Naive thymus-derived CD4-positive, alpha-beta T cell (primary cell): ENCODE measurements at regions of chr2 and their contacts with region 1.

Region 1: DNA sequence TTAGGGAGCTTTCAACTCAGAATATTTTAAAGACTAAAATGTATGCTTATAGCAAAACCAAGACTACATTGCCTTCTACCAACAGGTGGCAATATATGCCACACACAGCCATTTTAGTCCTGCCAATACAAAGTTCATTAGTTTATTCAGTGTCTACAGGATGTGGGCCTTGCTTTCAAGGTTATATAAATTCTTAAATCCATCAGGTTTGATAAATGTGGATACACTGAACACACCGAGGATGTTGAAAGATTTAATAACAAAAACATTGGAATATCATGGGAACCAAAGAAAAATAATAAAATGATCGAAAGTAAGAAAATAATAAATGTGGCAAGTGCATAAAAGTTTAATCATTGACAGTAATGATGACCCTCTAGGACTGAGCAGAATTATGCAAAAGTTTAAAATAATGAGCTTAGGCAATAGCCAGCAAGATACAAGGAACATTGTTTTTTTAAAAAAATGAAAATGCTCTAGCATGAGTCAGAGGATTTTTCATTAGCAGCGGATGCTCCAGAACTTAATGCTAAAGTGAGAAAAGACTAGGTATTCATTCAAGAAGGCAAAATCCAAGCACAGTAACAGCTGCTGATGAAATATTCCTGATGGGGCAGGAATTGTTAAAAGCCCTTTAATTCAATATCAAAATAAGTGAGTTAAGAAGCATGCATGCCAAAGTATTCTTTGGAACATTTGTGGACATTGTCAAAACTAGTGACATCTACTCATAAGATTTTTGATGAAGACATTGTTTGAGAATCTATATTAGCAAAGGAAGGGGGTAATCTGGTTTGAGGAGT is 14.2 kb downstream of the SCN9A start:
- DNase-seq: peak in 1 of 9 donors; percentile 9
- ATAC-seq: no peak
- H3K4me3 ChIP-seq: no peak overlapping the region
- H3K4me3 Mint-ChIP-seq: no peak overlapping the region
- H3K27ac ChIP-seq: no peak overlapping the region
- H3K27ac Mint-ChIP-seq: no peak overlapping the region
- H3K4me1 ChIP-seq: no peaks in the 10 kb centered on the region
- H3K4me1 Mint-ChIP-seq: no peaks in the 10 kb centered on the region
- H3K27me3 ChIP-seq: no peaks in the 10 kb centered on the region
- H3K27me3 Mint-ChIP-seq: peaks cover 0 to 5% (median 0%) of the 10 kb centered on the region in 5 donors

Region 2: GRCh38 chr2:166384774-166385173 is 23.2 kb after region 1 on chr2:
- CTCF ChIA-PET with region 1: no interaction called
- POLR2A ChIA-PET with region 1: no interaction called
- intact Hi-C with region 1: loop called in 1 of 2 experiments (anchors 1 kb)
- DNase-seq: peak in 1 of 9 donors; percentile 28
- ATAC-seq: no peak
- H3K4me3 ChIP-seq: no peak overlapping the region
- H3K4me3 Mint-ChIP-seq: no peak overlapping the region
- H3K27ac ChIP-seq: no peak overlapping the region
- H3K27ac Mint-ChIP-seq: no peak overlapping the region
- H3K4me1 ChIP-seq: no peaks in the 10 kb centered on the region
- H3K4me1 Mint-ChIP-seq: no peaks in the 10 kb centered on the region
- H3K27me3 ChIP-seq: no peaks in the 10 kb centered on the region
- H3K27me3 Mint-ChIP-seq: no peaks in the 10 kb centered on the region

Region 3: DNA sequence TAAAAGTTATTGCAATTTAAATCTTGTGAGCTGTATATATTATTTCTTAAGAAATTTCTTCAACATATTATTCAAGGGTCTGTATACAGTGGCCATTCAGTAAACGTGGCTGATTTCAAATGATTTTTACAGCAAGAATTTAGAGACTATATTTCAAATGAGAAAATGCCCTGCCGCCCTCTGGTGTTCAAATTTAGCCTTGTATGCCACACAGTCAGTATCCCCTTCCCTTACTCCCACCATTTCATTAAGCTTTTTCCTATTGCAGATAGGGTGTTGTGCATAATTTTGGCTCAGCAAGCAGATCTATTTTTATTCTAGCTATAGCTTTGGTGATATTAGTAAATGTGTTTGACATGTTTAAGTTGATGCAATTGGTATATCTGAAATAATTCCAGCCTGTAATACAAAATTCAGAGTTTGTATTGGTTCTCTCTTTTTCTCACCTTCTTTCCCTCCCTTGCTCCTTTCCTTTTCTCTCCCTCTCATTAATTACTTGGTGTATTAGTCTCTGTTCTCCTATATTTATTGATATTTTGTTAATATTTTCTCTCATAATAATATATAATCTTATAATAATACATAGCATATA is 155.3 kb after region 1 on chr2:
- CTCF ChIA-PET with region 1: no interaction called
- POLR2A ChIA-PET with region 1: no interaction called
- intact Hi-C with region 1: loop called in 1 of 2 experiments (anchors 1 kb)
- DNase-seq: no peak
- ATAC-seq: no peak
- H3K4me3 ChIP-seq: no peak overlapping the region
- H3K4me3 Mint-ChIP-seq: no peak overlapping the region
- H3K27ac ChIP-seq: no peak overlapping the region
- H3K27ac Mint-ChIP-seq: no peak overlapping the region
- H3K4me1 ChIP-seq: no peaks in the 10 kb centered on the region
- H3K4me1 Mint-ChIP-seq: no peaks in the 10 kb centered on the region
- H3K27me3 ChIP-seq: no peaks in the 10 kb centered on the region
- H3K27me3 Mint-ChIP-seq: peaks cover 0 to 3% (median 0%) of the 10 kb centered on the region in 5 donors